SK-N-SH (cell line): ENCODE measurements at regions of chr10 and their contacts with region 1.

Region 1: GRCh38 chr10:102678842-102679289 is 34.6 kb downstream of the TRIM8 start:
- DNase-seq: peak; percentile 81
- H3K4me3 ChIP-seq: peak overlapping the region in 1 of 2 experiments; percentile 32; a peak in 1 of 4 replicates
- H3K27ac ChIP-seq: no peak overlapping the region; a peak in 1 of 4 replicates
- H3K4me1 ChIP-seq: peaks cover 23 to 52% of the 10 kb centered on the region in 2 experiments
- H3K27me3 ChIP-seq: no peaks in the 10 kb centered on the region
- CTCF ChIP-seq: peak; percentile 68
- EP300 ChIP-seq: no peak
- RAD21 ChIP-seq: peak; percentile 64

Region 2: GRCh38 chr10:102660888-102661657 is 17.8 kb before region 1 on chr10:
- CTCF ChIA-PET with region 1: interaction called, 13 read pairs
- POLR2A ChIA-PET with region 1: interaction called, 3 read pairs
- DNase-seq: peak; percentile 91
- H3K4me3 ChIP-seq: no peak overlapping the region; a peak in 1 of 4 replicates
- H3K27ac ChIP-seq: peak overlapping the region in 1 of 2 experiments; percentile 31; a peak in 1 of 4 replicates
- H3K4me1 ChIP-seq: peaks cover 0 to 15% of the 10 kb centered on the region in 2 experiments; a peak in 1 of 4 replicates
- H3K27me3 ChIP-seq: no peaks in the 10 kb centered on the region
- CTCF ChIP-seq: no peak
- EP300 ChIP-seq: no peak
- RAD21 ChIP-seq: no peak

Region 3: DNA sequence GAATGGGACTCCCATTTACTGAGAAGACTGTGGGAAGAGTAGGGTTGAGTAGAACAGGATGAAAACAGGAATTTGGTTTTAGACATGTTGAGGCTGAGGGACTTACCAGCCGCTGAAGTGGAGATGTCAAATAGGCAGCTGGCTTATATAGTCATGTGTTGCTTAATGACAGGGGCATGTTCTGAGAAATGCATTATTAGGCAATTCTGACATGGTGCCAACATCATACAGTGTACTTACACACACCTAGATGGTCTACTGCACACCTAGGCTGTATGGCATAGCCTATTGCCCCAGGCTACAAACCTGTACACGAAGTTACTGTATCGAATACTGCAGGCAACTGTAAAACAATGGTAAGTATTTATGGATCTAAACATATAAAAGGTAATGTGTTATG is 17.9 kb after region 1 on chr10:
- CTCF ChIA-PET with region 1: interaction called, 13 read pairs
- POLR2A ChIA-PET with region 1: no interaction called
- DNase-seq: no peak
- H3K4me3 ChIP-seq: no peak overlapping the region
- H3K27ac ChIP-seq: no peak overlapping the region
- H3K4me1 ChIP-seq: no peaks in the 10 kb centered on the region; a peak in 1 of 4 replicates
- H3K27me3 ChIP-seq: no peaks in the 10 kb centered on the region
- CTCF ChIP-seq: no peak
- EP300 ChIP-seq: no peak
- RAD21 ChIP-seq: no peak

Region 4: DNA sequence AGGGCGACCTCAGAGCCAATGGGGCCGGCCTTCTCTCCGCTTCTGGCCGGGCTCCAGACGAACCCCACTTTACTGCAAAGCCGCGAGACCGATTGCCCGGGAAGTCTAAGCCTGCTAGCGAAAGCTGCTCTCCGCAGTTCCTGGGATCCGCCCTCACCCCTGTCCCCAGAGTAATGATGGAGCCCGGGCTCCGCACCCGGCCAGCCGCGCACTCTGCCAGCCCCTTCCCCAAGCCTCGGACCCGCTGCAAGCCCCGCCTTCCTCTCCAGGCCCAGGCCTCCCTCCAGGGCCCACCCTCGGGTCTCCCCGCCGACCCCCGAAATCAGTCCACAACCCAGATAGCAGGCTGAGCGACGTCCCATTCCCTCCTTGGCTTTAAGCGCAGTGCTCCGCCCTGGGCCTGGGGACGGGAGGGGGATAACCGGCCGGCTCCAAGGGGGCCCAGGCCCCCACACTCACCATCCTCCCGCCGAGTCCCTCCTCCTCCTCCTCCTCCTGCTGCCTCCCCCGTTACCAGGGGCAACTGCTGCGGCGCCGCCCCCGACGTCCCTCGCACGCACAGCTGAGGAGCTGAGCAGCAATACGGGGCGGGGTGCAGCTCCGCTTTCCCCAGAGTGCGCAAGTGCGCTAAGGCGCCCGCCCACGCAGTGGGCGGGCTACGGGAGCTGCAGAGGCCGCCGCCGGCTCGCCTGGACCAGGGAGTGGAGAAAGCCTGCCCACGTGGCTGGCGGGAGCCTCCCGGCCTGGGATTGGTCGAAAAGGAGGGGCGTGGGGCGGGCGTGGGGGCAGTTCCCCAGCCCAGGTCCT is 35.2 kb after region 1 on chr10 and contains the start of gene ARL3:
- CTCF ChIA-PET with region 1: interaction called, 123 read pairs
- POLR2A ChIA-PET with region 1: interaction called, 3 read pairs
- DNase-seq: peak; percentile 98
- H3K4me3 ChIP-seq: peak within 1 kb of the TSS; percentile 87 to 91
- H3K27ac ChIP-seq: peak within 1 kb of the TSS; percentile 80 to 86
- H3K4me1 ChIP-seq: peaks cover 18 to 20% of the 10 kb centered on the region in 2 experiments; a peak in 3 of 4 replicates
- H3K27me3 ChIP-seq: no peaks in the 10 kb centered on the region
- CTCF ChIP-seq: no peak; the same call in none of the 2 replicates
- EP300 ChIP-seq: peak in 1 of 2 experiments; percentile 22; a peak in 1 of 4 replicates
- RAD21 ChIP-seq: no peak; the same call in 1 of the 2 replicates
- polyA plus RNA-seq, gene ARL3: 11.2 and 12.5 TPM in 2 replicates